HEK293T (cell line): ENCODE measurements at regions of chr1 and their contacts with region 1.

Region 1: DNA sequence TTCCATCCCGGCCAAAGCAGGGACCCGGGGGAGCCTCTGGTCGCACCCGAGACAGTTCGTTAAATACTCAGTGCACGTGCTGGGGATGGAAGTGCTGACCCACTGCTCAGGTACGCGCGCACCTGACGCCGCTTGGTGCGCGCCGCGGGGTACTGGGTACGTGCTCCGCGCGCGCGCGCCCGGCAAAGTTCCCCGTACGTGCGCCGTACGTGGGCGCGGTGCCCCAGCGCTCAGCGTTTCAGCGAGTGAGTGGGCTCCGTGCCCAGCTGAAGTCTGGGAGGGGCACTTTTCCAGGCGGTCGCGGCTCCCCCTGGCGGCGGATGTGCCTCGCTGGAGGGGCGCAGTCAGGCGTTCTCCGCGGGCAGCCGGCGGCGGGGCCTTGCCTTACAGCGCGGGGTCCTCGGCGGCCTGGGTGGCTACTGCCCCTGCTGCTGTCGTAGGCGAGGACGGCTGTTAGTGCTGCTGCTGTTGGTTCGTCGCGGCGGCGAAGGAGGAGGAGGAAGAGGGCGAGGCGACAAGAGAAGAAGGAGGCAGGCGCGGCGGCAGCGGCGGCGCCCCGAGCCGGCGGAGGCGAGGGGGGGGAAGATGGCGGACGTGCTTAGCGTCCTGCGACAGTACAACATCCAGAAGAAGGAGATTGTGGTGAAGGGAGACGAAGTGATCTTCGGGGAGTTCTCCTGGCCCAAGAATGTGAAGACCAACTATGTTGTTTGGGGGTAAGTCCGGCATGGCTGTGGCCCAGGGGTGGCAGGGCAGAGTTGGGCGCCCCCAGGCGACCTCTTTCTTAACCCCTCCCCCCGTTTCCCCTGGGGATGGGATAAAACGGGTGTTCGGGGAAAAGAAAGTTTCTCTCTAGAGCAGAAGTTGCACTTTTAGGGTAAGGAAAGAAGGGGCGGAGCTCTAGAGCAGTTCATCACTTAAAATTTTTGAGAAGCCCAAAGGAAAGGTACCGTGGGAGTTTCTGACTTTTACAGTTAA is at the start of gene CDC73:
- DNase-seq: peak; percentile 93

Region 2: DNA sequence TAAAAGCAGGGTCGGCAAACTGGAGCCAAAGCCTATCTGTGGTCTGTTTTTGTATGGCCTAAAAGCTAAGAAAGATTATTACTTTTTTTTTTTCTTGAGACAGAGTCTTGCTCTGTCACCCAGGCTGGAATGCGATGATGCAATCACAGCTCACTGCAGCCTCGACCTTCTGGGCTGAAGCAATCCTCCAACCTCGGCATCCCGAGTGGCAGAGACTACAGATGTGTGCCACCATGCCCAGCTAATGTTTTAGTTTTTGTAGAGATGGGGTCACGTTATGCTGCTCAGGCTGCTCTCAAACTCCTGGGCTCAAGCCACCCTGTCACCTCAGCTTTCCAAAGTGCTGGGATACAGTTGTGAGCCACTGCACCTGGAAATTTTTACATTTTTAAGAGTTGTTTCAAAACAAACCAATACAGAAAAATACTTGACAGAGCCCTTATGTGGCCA is 10.2 kb before region 1 on chr1:
- CTCF ChIA-PET with region 1: interaction called, 3 read pairs
- POLR2A ChIA-PET with region 1: interaction called, 13 read pairs
- DNase-seq: no peak